Mammary epithelial cell (primary cell): ENCODE measurements at regions of chr18 and their contacts with region 1.

Region 1: DNA sequence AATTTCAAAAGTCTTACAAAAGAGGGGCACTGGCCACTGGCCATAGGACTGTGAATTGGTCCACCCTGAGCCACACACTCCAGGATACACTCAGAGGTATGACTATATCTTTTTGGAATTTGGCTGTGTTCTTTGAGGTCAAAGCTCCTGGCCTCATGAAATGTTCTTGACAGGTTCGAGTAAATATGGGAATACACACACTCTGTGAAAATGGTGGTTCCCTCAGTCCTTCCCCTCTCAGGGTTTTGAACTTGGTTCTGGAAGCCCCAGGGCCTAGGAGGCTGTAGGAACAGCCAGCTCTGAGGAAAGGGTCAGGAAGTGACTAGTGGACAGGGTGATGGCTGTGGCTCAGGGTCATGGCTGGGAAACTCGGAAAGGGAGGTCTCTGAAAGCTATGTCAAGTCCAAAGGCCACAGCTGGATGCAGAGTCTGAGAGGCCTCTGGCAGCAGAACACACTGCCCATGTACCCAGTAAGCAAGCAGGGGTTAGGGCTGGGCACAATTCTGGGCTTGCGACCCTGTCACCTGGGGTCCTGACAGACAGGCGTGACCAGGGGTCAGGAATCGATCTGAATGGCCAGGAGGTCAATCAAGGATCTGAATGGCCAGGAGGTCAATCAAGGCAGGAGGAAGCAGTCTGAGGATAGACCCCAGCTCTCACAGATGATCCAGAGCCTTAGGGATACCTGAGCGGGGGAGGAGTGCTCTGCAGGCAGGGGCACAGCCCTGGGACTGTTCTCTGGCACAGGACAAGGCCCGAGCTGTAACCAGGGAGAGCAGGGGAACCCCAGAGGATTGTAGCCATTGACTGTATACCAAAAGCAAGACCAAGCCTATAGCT is 223.4 kb upstream of the SMAD2 start:
- DNase-seq: peak; percentile 55
- H3K4me3 ChIP-seq: no peak overlapping the region
- H3K27ac ChIP-seq: no peak overlapping the region
- H3K4me1 ChIP-seq: peaks cover 47% of the 10 kb centered on the region
- H3K27me3 ChIP-seq: no peaks in the 10 kb centered on the region
- CTCF ChIP-seq: no peak

Region 2: DNA sequence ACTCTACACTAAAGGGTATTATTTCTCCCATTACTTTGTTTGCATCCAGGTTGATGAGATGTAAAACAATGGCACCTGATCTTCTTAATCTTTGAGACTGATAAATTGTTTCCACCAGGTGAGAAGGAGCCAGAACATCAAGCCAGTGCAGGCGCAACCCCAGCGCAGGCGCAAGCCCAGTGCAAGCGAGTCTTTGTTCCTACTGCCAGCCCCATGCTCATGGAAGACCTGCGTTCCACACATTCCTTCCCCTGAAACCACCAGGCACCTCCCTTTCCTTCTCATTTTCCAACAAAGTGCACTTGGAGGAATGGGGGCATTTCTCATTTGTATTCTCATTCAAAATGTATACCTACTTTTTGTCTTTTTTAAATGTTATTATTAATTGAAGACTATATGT is 34.7 kb before region 1 on chr18:
- CTCF ChIA-PET with region 1: no interaction called
- dilution Hi-C with region 1: loop called (anchors 5 kb)
- in situ Hi-C with region 1: no loop called
- intact Hi-C with region 1: no loop called
- DNase-seq: peak; percentile 8
- H3K4me3 ChIP-seq: no peak overlapping the region
- H3K27ac ChIP-seq: peak overlapping the region; percentile 29
- H3K4me1 ChIP-seq: peaks cover 13% of the 10 kb centered on the region
- H3K27me3 ChIP-seq: no peaks in the 10 kb centered on the region
- CTCF ChIP-seq: no peak

Region 3: GRCh38 chr18:48203961-48204666 is 50.3 kb after region 1 on chr18:
- CTCF ChIA-PET with region 1: no interaction called
- dilution Hi-C with region 1: loop called (anchors 5 kb)
- in situ Hi-C with region 1: no loop called
- intact Hi-C with region 1: no loop called
- DNase-seq: peak; percentile 69
- H3K4me3 ChIP-seq: no peak overlapping the region
- H3K27ac ChIP-seq: no peak overlapping the region
- H3K4me1 ChIP-seq: peaks cover 26% of the 10 kb centered on the region
- H3K27me3 ChIP-seq: no peaks in the 10 kb centered on the region
- CTCF ChIP-seq: no peak